ENCODE measurements at regions of chr1 and their contacts with region 1.

Region 1: DNA sequence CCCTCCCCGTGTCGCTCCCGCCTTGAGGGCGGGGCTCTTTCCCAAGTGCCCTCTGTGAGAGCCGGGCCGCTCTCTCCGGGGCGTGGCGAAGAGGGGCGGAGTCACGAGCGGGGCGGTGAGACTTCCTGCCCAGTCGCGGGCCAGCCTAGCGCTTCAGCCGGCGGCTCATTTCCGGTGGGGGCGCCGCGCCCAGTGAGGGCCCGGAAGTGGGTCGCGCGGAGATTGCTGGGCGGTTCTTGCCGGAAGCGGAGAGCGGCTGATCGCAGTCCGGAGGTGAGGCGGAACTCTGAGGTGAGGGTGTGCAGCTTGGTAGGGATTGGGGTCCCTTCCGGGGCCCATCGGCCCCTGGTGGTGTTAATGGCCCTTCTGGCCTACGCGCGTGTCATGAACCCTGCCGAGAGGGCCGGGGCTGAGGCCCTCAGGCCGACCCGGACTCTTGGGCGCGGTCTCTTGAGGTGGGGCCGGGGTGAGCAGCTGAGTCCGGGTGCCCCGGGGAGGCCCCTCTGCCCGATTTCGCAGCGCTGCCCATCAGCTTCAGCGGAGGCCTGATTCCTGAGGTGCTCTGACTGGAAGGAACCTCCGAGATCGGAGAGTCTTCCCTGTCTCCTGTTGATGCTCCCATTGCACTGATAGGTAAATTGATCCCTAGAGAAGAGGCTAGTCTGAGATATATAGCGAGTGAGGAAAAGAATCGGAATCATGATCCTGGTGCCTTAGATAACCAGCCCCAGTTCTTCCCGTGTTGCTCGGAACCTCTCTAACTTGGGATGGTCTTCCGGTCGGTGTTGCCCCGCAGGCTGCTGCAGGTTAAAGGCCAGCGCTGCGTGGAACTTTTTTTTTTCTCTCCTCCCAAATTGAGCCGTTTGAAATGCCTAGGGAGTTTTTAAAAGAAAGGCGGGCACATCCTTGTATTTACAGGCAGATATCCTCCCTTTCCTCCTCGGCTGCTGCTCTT is at the start of gene CAP1:
- DNase-seq: peak; percentile 94
- ATAC-seq: peak; percentile 92
- H3K4me3 ChIP-seq: peak within 1 kb of the TSS; percentile 88 to 95 (median 92)
- H3K27ac ChIP-seq: peak within 1 kb of the TSS; percentile 94
- H3K4me1 ChIP-seq: peaks cover 42% of the 10 kb centered on the region
- H3K27me3 ChIP-seq: no peaks in the 10 kb centered on the region; a peak in 1 of 5 replicates
- CTCF ChIP-seq: no peak
- EP300 ChIP-seq: 0 out of 4 replicates have a peak, but pooled peaks of 1 of the 2 experiments have one; percentile 3
- POLR2A ChIP-seq: peak; percentile 57 to 87
- RAD21 ChIP-seq: 0 out of 2 replicates have a peak, but pooled peaks have one; percentile 9
- total RNA-seq, gene CAP1: 174 and 228 TPM in 2 replicates

Region 2: DNA sequence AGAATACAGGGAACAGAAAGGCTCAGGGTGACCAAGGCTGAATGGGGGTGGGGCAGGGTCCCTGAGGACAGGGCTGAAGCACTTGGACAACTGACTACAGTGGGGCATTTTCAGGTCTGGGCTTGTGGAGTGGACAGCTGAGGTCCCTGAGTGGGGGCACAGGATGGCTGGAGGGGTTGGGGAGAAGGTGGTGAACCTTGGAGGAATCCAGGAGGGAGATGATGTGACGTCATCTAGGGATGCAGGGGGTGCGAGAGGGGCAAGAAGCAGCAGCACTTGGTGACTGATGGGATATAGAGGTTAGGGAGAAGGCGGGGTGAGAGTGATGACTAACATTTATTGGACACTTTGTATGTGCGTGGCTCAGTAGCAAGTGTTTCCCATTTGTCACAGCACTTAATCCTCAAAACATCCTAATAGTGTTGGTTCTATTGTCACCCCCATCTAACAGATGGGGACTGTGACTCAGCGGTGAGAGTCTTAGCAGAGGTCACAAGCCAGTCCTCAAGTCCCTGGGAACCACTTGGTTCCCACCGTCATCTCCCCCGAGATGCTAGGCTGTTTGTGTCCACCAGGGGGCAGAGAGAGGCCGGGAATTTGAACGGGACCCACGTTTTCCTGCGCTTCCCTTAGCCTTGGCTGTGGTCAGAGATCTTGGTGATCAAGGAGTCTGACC is 224.2 kb before region 1 on chr1:
- CTCF ChIA-PET with region 1: no interaction called
- POLR2A ChIA-PET with region 1: no interaction called
- in situ Hi-C with region 1: no loop called
- intact Hi-C with region 1: loop called (anchors 10 kb)
- DNase-seq: peak; percentile 49
- ATAC-seq: peak; percentile 82
- H3K4me3 ChIP-seq: no peak overlapping the region
- H3K27ac ChIP-seq: no peak overlapping the region
- H3K4me1 ChIP-seq: peaks cover 10% of the 10 kb centered on the region; the same call in 1 of the 2 replicates
- H3K27me3 ChIP-seq: peaks cover 1 to 13% of the 10 kb centered on the region in 2 experiments; a peak in 2 of 5 replicates
- CTCF ChIP-seq: peak; percentile 92
- EP300 ChIP-seq: no peak
- POLR2A ChIP-seq: no peak
- RAD21 ChIP-seq: peak; percentile 91

Region 3: GRCh38 chr1:39919545-39919944 is 121.2 kb before region 1 on chr1:
- CTCF ChIA-PET with region 1: no interaction called
- POLR2A ChIA-PET with region 1: interaction called, 3 read pairs
- in situ Hi-C with region 1: loop called (anchors 10 kb)
- intact Hi-C with region 1: loop called (anchors 10 kb)
- DNase-seq: peak; percentile 61
- ATAC-seq: peak; percentile 86
- H3K4me3 ChIP-seq: no peak overlapping the region
- H3K27ac ChIP-seq: no peak overlapping the region
- H3K4me1 ChIP-seq: peaks cover 14% of the 10 kb centered on the region
- H3K27me3 ChIP-seq: peaks cover 0 to 13% of the 10 kb centered on the region in 2 experiments; a peak in 3 of 5 replicates
- CTCF ChIP-seq: peak; percentile 82
- EP300 ChIP-seq: no peak
- POLR2A ChIP-seq: no peak
- RAD21 ChIP-seq: peak; percentile 72; the same call in 1 of the 2 replicates

Region 4: GRCh38 chr1:39926343-39926793 is 114.4 kb before region 1 on chr1:
- CTCF ChIA-PET with region 1: no interaction called
- POLR2A ChIA-PET with region 1: interaction called, 3 read pairs
- in situ Hi-C with region 1: loop called (anchors 10 kb)
- intact Hi-C with region 1: no loop called
- DNase-seq: peak; percentile 13
- ATAC-seq: peak; percentile 78
- H3K4me3 ChIP-seq: no peak overlapping the region
- H3K27ac ChIP-seq: no peak overlapping the region
- H3K4me1 ChIP-seq: peaks cover 16% of the 10 kb centered on the region
- H3K27me3 ChIP-seq: peaks cover 3 to 10% of the 10 kb centered on the region in 2 experiments; a peak in 4 of 5 replicates
- CTCF ChIP-seq: no peak
- EP300 ChIP-seq: no peak
- POLR2A ChIP-seq: no peak
- RAD21 ChIP-seq: no peak

Region 5: GRCh38 chr1:40014812-40015594 is 25.8 kb before region 1 on chr1:
- CTCF ChIA-PET with region 1: no interaction called
- POLR2A ChIA-PET with region 1: no interaction called
- in situ Hi-C with region 1: no loop called
- intact Hi-C with region 1: no loop called
- DNase-seq: no peak
- ATAC-seq: no peak
- H3K4me3 ChIP-seq: no peak overlapping the region
- H3K27ac ChIP-seq: no peak overlapping the region
- H3K4me1 ChIP-seq: no peaks in the 10 kb centered on the region
- H3K27me3 ChIP-seq: no peaks in the 10 kb centered on the region
- CTCF ChIP-seq: no peak
- EP300 ChIP-seq: no peak
- POLR2A ChIP-seq: no peak
- RAD21 ChIP-seq: no peak

Region 6: DNA sequence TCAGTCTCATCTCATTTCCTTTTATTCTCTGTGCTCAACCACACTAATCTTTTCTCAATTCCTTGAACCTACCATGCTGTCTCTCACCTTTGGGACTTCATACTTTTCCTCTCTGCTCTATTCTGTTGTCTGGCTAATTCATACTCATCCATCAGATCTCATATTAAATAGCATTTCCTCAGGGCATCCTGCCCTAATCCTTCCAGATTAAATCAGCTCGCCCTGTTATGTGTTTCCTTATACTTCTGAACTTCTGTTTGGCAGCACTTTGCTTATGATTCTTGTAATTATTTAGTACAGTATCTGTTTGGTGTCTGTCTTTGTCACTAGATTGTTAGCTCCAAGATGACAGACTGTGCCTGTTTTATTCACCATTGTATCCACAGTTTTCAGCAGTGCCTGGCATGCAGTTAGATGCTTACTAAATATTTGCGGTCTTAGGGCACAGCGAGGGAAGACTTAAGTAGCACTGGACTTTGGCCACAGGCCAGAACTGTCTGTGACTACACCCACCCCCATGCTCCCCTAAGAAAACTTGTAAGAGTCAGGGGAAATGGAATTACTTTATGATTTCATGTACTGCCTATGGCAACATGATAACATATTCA is 10.2 kb before region 1 on chr1:
- CTCF ChIA-PET with region 1: no interaction called
- POLR2A ChIA-PET with region 1: no interaction called
- in situ Hi-C with region 1: no loop called
- intact Hi-C with region 1: no loop called
- DNase-seq: no peak
- ATAC-seq: no peak
- H3K4me3 ChIP-seq: no peak overlapping the region
- H3K27ac ChIP-seq: no peak overlapping the region
- H3K4me1 ChIP-seq: peaks cover 6% of the 10 kb centered on the region; the same call in 1 of the 2 replicates
- H3K27me3 ChIP-seq: 0 out of 5 replicates have a peak, but pooled peaks cover 0 to 3% of the 10 kb centered on the region in 2 experiments
- CTCF ChIP-seq: no peak
- EP300 ChIP-seq: no peak
- POLR2A ChIP-seq: no peak
- RAD21 ChIP-seq: no peak

Region 7: GRCh38 chr1:40057310-40058030 is 16.7 kb after region 1 on chr1:
- CTCF ChIA-PET with region 1: no interaction called
- POLR2A ChIA-PET with region 1: no interaction called
- in situ Hi-C with region 1: no loop called
- intact Hi-C with region 1: loop called (anchors 2 kb)
- DNase-seq: peak; percentile 74
- ATAC-seq: peak; percentile 53
- H3K4me3 ChIP-seq: no peak overlapping the region
- H3K27ac ChIP-seq: peak overlapping the region; percentile 60
- H3K4me1 ChIP-seq: peaks cover 74% of the 10 kb centered on the region
- H3K27me3 ChIP-seq: no peaks in the 10 kb centered on the region
- CTCF ChIP-seq: no peak
- EP300 ChIP-seq: no peak
- POLR2A ChIP-seq: no peak
- RAD21 ChIP-seq: no peak

Region 8: GRCh38 chr1:40094466-40095110 is 53.8 kb after region 1 on chr1:
- CTCF ChIA-PET with region 1: no interaction called
- POLR2A ChIA-PET with region 1: no interaction called
- in situ Hi-C with region 1: no loop called
- intact Hi-C with region 1: no loop called
- DNase-seq: no peak
- ATAC-seq: no peak
- H3K4me3 ChIP-seq: no peak overlapping the region
- H3K27ac ChIP-seq: no peak overlapping the region
- H3K4me1 ChIP-seq: peaks cover 37% of the 10 kb centered on the region
- H3K27me3 ChIP-seq: peaks cover 0 to 2% of the 10 kb centered on the region in 2 experiments; a peak in 1 of 5 replicates
- CTCF ChIP-seq: no peak
- EP300 ChIP-seq: no peak
- POLR2A ChIP-seq: no peak
- RAD21 ChIP-seq: no peak